ENCODE measurements at regions of chr18 and their contacts with region 1.

Region 1: GRCh38 chr18:46402396-46402795 is 254.6 kb downstream of the LOXHD1 start:
- DNase-seq: no peak
- H3K4me3 ChIP-seq: no peak overlapping the region
- H3K27ac ChIP-seq: no peak overlapping the region
- H3K4me1 ChIP-seq: no peaks in the 10 kb centered on the region; a peak in 1 of 7 replicates
- H3K27me3 ChIP-seq: no peaks in the 10 kb centered on the region; a peak in 1 of 7 replicates
- CTCF ChIP-seq: no peak
- EP300 ChIP-seq: no peak
- POLR2A ChIP-seq: no peak
- RAD21 ChIP-seq: no peak

Region 2: DNA sequence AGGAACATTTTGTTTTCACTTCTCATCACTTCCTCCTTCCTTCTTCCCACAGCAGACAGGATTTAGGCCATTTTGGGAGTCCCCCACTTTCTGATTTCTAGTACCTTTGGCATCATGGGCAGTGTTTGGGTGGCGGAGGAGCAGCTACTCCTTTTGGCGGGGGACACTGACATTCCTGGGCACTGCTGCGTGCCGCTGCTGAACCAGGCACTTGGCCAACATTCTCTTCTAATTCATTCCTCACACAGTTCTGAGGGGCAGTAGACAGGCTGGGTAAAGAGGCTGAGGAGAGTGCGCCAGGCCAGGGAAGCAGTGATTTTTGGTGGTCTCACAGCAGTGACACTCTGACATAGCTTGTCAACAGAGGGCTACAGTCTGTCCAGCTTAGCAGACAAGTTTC is 15.6 kb before region 1 on chr18:
- CTCF ChIA-PET with region 1: interaction called, 150 read pairs
- POLR2A ChIA-PET with region 1: no interaction called
- DNase-seq: no peak
- H3K4me3 ChIP-seq: no peak overlapping the region
- H3K27ac ChIP-seq: no peak overlapping the region
- H3K4me1 ChIP-seq: no peaks in the 10 kb centered on the region
- H3K27me3 ChIP-seq: no peaks in the 10 kb centered on the region
- CTCF ChIP-seq: no peak
- EP300 ChIP-seq: no peak
- POLR2A ChIP-seq: no peak
- RAD21 ChIP-seq: no peak

Region 3: GRCh38 chr18:46531482-46531881 is 129.1 kb after region 1 on chr18:
- CTCF ChIA-PET with region 1: no interaction called
- POLR2A ChIA-PET with region 1: no interaction called
- DNase-seq: no peak
- H3K4me3 ChIP-seq: no peak overlapping the region
- H3K27ac ChIP-seq: no peak overlapping the region
- H3K4me1 ChIP-seq: no peaks in the 10 kb centered on the region; a peak in 1 of 7 replicates
- H3K27me3 ChIP-seq: no peaks in the 10 kb centered on the region
- CTCF ChIP-seq: no peak
- EP300 ChIP-seq: no peak
- POLR2A ChIP-seq: no peak
- RAD21 ChIP-seq: no peak

Measured in H1 (cell line).